H1 (cell line): ENCODE measurements at regions of chr7 and their contacts with region 1.

Region 1: GRCh38 chr7:88243345-88243909 is 23.6 kb upstream of the SRI start:
- DNase-seq: peak in 1 of 2 experiments; percentile 45
- H3K4me3 ChIP-seq: no peak overlapping the region
- H3K27ac ChIP-seq: no peak overlapping the region
- H3K4me1 ChIP-seq: peaks cover 0 to 3% (median 0%) of the 10 kb centered on the region in 4 experiments; a peak in 1 of 7 replicates
- H3K27me3 ChIP-seq: no peaks in the 10 kb centered on the region
- CTCF ChIP-seq: peak in 2 of 3 experiments; percentile 47 to 78; a peak in 2 of 4 replicates
- EP300 ChIP-seq: no peak
- POLR2A ChIP-seq: no peak
- RAD21 ChIP-seq: peak; percentile 89 to 94

Region 2: DNA sequence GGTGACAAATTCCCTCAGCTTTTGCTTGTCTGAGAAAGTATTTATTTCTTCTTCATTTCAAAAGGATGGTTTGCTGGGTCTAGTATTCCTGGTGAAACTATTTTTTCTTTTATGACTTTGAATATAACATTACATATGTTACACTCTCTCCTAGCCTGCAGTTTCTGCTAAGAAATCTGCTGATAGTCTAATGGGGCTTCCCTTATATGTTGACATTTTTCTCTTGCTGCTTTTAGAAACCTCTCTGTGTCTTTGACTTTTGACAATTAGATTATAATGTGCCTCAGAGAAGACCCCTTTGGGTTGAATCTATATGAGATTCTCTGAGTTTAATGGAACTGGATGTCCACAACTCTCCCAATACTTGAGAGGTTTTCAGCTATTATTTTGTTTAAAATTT is 10.2 kb after region 1 on chr7:
- CTCF ChIA-PET with region 1: interaction called, 11 read pairs
- POLR2A ChIA-PET with region 1: interaction called, 3 read pairs
- DNase-seq: no peak
- H3K4me3 ChIP-seq: no peak overlapping the region
- H3K27ac ChIP-seq: no peak overlapping the region
- H3K4me1 ChIP-seq: no peaks in the 10 kb centered on the region
- H3K27me3 ChIP-seq: no peaks in the 10 kb centered on the region
- CTCF ChIP-seq: no peak
- EP300 ChIP-seq: no peak
- POLR2A ChIP-seq: no peak
- RAD21 ChIP-seq: no peak

Region 3: DNA sequence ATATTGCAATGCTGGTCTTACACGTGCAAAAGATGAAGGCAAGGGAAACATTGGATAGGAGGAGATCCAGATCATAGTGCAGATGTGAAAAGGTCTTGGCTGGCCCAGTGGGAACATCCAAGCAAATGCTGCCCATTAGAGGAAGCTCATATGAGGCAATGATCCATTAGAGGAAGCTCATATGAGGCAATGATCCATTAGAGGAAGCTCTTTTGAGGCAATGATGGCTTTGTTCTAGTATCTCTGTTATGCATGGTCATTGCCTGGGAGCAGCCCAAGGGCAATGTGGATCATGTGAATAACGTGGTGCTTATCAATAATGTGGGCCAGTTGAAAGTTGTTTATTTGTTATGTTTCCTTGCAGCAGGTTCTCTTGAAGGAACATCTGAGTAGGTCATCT is 25.4 kb after region 1 on chr7:
- CTCF ChIA-PET with region 1: no interaction called
- POLR2A ChIA-PET with region 1: no interaction called
- DNase-seq: no peak
- H3K4me3 ChIP-seq: no peak overlapping the region
- H3K27ac ChIP-seq: no peak overlapping the region
- H3K4me1 ChIP-seq: no peaks in the 10 kb centered on the region
- H3K27me3 ChIP-seq: peaks cover 0 to 1% (median 0%) of the 10 kb centered on the region in 4 experiments; a peak in 1 of 7 replicates
- CTCF ChIP-seq: no peak
- EP300 ChIP-seq: no peak
- POLR2A ChIP-seq: no peak
- RAD21 ChIP-seq: no peak

Region 4: GRCh38 chr7:88357781-88358525 is 114.5 kb after region 1 on chr7:
- CTCF ChIA-PET with region 1: interaction called, 38 read pairs
- POLR2A ChIA-PET with region 1: no interaction called
- DNase-seq: no peak
- H3K4me3 ChIP-seq: no peak overlapping the region
- H3K27ac ChIP-seq: no peak overlapping the region
- H3K4me1 ChIP-seq: no peaks in the 10 kb centered on the region
- H3K27me3 ChIP-seq: no peaks in the 10 kb centered on the region
- CTCF ChIP-seq: peak in 2 of 3 experiments; percentile 4 to 27; a peak in 1 of 4 replicates
- EP300 ChIP-seq: no peak
- POLR2A ChIP-seq: no peak
- RAD21 ChIP-seq: peak; percentile 37 to 56; a peak in 3 of 4 replicates